IMR-90 (cell line): ENCODE measurements at regions of chr11 and their contacts with region 1.

Region 1: DNA sequence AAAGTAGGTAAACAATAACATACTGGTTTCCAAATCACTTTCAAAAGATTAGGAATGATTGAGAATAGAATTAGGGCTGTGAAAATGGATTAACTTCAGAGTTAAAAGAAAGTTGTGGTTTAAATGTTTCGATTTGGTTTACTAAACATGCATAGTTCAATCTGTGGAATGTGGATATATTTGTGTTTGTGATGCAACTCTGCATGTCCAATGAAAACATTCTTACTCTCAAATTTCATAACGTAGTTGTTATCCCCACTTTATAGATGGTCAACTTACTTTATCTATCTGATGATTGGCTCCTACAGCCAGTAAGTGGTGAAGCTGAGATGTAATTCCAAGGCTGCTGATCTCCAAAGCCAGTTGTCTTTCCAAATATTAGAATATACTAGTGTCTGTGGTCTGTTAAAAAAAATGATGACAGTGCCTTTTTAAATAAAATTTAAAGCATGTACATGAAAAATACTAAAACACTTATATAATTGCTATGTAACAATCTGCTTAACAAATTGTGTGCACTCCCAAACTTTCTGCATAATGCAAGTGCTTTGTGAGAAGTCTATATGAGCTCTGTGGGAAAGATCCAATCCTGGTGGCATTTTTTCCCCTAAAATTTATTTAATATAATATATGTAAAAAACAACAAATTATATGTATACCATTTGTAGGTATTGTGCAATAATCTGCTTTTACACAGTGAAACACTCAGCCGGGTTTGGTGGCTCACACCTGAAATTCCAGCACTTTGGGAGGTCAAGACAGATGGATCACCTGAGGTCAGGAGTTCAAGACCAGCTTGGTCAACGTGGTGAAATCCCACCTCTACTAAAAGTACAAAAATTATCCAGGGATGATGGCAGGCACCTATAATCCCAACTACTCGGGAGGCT is 9.7 kb upstream of the SIK3 start:
- DNase-seq: peak; percentile 68
- ATAC-seq: peak; percentile 82
- H3K4me3 ChIP-seq: no peak overlapping the region
- H3K27ac ChIP-seq: no peak overlapping the region
- H3K4me1 ChIP-seq: peaks cover 1% of the 10 kb centered on the region; the same call in 1 of the 2 replicates
- H3K27me3 ChIP-seq: no peaks in the 10 kb centered on the region
- CTCF ChIP-seq: no peak
- POLR2A ChIP-seq: no peak
- RAD21 ChIP-seq: no peak

Region 2: GRCh38 chr11:116732271-116733042 is 375.5 kb before region 1 on chr11:
- CTCF ChIA-PET with region 1: no interaction called
- POLR2A ChIA-PET with region 1: no interaction called
- dilution Hi-C with region 1: no loop called
- in situ Hi-C with region 1: no loop called
- intact Hi-C with region 1: loop called (anchors 1 kb)
- DNase-seq: peak; percentile 68
- ATAC-seq: peak; percentile 99
- H3K4me3 ChIP-seq: no peak overlapping the region
- H3K27ac ChIP-seq: no peak overlapping the region
- H3K4me1 ChIP-seq: no peaks in the 10 kb centered on the region; the same call in 1 of the 2 replicates
- H3K27me3 ChIP-seq: peaks cover 20% of the 10 kb centered on the region; the same call in 1 of the 2 replicates
- CTCF ChIP-seq: peak; percentile 77
- POLR2A ChIP-seq: no peak
- RAD21 ChIP-seq: peak; percentile 58

Region 3: GRCh38 chr11:116879800-116880625 is 227.9 kb before region 1 on chr11:
- CTCF ChIA-PET with region 1: interaction called, 7 read pairs
- POLR2A ChIA-PET with region 1: no interaction called
- dilution Hi-C with region 1: no loop called
- in situ Hi-C with region 1: loop called (anchors 5 kb)
- intact Hi-C with region 1: loop called (anchors 1 kb)
- DNase-seq: peak; percentile 85
- ATAC-seq: peak; percentile 93
- H3K4me3 ChIP-seq: no peak overlapping the region
- H3K27ac ChIP-seq: no peak overlapping the region
- H3K4me1 ChIP-seq: peaks cover 7% of the 10 kb centered on the region
- H3K27me3 ChIP-seq: no peaks in the 10 kb centered on the region
- CTCF ChIP-seq: peak; percentile 79
- POLR2A ChIP-seq: no peak
- RAD21 ChIP-seq: peak; percentile 89

Region 4: DNA sequence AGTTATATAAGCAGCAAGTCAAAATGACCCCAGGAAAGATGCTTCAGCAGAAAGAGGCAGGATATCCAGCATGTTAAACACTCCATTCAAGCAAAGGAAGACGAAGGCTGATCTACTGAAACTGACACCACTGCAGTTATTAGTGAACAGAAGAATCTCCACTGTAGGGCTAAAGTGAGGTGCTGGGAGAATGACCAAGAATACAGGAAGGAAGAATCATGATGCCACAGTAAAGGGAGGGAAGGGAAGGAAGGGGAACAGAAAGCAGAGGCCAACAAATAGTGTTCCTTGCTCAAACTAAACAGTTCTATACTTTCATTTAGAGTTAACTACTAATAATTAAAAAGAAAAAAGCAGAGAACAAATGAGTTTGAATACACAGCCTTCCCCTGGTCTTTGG is 102.2 kb before region 1 on chr11:
- CTCF ChIA-PET with region 1: no interaction called
- POLR2A ChIA-PET with region 1: no interaction called
- dilution Hi-C with region 1: no loop called
- in situ Hi-C with region 1: no loop called
- intact Hi-C with region 1: no loop called
- DNase-seq: no peak
- ATAC-seq: no peak
- H3K4me3 ChIP-seq: no peak overlapping the region
- H3K27ac ChIP-seq: no peak overlapping the region
- H3K4me1 ChIP-seq: peaks cover 4% of the 10 kb centered on the region
- H3K27me3 ChIP-seq: no peaks in the 10 kb centered on the region
- CTCF ChIP-seq: no peak
- POLR2A ChIP-seq: no peak
- RAD21 ChIP-seq: no peak

Region 5: GRCh38 chr11:117143871-117144476 is 36.0 kb after region 1 on chr11 and contains the start of gene PAFAH1B2:
- CTCF ChIA-PET with region 1: no interaction called
- POLR2A ChIA-PET with region 1: no interaction called
- dilution Hi-C with region 1: no loop called
- in situ Hi-C with region 1: no loop called
- intact Hi-C with region 1: loop called (anchors 2 kb)
- DNase-seq: peak; percentile 90
- ATAC-seq: peak; percentile 87
- H3K4me3 ChIP-seq: peak within 1 kb of the TSS; percentile 73
- H3K27ac ChIP-seq: peak within 1 kb of the TSS; percentile 87
- H3K4me1 ChIP-seq: peaks cover 2% of the 10 kb centered on the region; the same call in 1 of the 2 replicates
- H3K27me3 ChIP-seq: no peaks in the 10 kb centered on the region
- CTCF ChIP-seq: no peak
- POLR2A ChIP-seq: peak; percentile 87
- RAD21 ChIP-seq: no peak
- total RNA-seq, gene PAFAH1B2: 213 and 280 TPM in 2 replicates